KBM-7 (cell line): ENCODE measurements at regions of chr4 and their contacts with region 1.

Region 1: DNA sequence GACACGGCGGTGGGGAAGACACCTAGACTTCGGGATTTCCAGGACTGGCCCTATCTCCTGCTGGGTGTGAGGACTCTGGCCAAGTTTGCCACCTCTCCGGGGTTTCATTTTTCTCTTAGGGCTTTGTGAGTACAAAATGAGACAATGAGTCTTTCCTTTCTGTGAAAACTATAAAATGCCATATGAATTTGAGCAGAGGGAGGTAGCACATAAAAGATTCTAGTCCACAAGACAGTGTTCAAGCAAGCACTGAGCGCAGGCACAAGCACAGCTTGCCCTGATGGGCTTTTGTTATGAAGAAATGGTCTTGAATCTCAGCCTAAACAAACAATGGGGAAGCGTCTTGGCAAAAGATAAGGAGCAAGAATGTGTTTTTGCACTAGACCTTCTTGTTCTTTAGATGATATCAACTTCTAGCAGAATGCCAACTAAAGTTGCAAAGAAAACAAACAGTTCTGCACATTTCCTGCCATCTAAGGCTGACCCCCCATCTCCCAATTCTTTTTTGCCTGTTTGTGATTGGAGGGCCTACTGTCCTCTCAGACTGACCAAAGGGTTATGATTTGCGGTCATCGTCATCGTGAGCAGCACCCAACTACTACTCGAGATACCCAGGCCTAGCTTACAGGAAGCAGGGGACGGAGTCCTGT is 73.0 kb upstream of the ZNF518B start:
- DNase-seq: no peak

Region 2: DNA sequence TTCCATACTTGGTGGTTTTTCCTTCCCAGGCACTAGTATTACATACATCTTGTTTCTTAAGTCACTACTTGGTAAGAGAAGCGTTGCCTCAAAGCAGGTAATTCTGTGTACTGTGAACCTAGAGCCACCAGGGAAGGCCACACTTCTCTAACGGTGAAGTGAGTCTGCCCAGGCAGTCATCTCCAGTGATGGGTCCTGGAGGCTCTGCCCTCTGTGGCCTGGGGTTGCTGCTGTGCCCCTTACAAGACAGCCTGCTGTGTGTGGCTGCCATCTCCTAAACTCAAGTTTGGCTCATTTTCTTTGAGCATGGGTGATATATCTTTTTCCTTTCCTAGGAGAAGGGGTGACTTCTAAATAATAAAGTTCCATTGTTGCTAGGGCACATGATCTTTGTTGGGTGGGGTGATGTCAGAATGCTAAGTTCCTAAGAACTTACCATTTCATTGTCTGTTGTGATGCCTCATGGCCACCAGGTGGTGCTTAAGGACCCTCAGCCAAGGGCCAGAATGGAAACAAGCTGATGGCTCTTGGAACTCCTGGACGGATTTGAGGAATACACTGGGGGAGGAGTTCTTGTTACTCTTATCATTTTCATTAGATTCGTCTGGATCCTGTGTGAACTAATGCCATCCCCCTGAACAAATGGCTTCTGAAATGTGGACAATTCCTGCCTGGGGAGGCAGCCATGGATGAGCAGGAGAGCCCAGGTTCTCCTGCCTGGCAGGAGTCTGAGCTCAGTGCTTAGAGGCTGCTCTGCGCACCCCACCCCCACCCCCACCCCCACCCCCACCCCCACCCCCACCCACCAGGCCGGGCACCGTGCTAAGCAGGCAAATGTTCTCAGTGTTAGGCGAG is 372.6 kb before region 1 on chr4:
- in situ Hi-C with region 1: loop called (anchors 25 kb)
- DNase-seq: peak; percentile 58